ENCODE measurements at regions of chr12 and their contacts with region 1.

Region 1: DNA sequence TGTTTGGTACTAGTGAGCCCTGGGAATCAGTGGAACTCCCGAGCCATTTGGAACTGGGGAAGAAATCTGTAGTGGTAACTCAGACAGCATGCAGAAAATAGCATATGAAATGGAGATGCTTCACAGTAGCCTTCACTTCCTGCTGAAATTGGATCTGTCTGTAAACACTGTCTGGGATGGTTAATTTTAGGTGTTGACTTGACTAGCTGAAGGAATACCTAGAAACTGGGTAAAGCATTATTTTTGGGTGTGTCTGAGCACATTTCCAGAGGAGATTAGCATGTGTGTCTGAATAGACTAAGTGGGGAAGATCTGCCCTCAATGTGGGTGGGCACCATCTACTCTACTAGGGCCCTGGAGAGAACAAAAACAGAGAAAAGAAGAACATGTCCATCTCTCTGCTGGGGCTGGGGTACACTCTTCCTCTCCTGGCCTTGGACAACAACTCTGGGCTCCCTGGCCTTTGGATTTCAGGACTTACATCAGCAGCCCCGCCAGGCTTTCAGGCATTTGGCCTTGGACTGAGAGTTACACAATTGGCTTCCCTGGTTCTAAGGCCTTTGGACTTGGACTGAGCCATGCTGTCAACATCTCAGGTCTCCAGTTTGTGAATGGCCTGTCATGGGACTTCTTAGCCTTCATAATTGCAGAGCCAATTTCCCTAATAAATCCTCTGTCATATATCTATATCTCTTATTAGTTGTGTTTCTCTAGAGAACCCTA is 14.0 kb upstream of the CRADD start:
- DNase-seq: peak; percentile 27 to 52
- ATAC-seq: peak; percentile 99
- H3K4me3 ChIP-seq: no peak overlapping the region
- H3K27ac ChIP-seq: peak overlapping the region; percentile 74 to 92 (median 89)
- H3K4me1 ChIP-seq: peaks cover 18 to 25% of the 10 kb centered on the region in 2 donors
- H3K27me3 ChIP-seq: no peaks in the 10 kb centered on the region
- CTCF ChIP-seq: no peak
- POLR2A ChIP-seq: no peak

Region 2: GRCh38 chr12:93677195-93678064 is 14.3 kb after region 1 on chr12 and contains the start of gene CRADD:
- in situ Hi-C with region 1: no loop called
- intact Hi-C with region 1: loop called (anchors 1 kb)
- DNase-seq: peak; percentile 78 to 84
- ATAC-seq: peak; percentile 92 to 96
- H3K4me3 ChIP-seq: peak within 1 kb of the TSS; percentile 71 to 87 (median 84)
- H3K27ac ChIP-seq: peak within 1 kb of the TSS; percentile 95 to 96 (median 96)
- H3K4me1 ChIP-seq: peaks cover 44 to 47% of the 10 kb centered on the region in 2 donors
- H3K27me3 ChIP-seq: no peaks in the 10 kb centered on the region
- CTCF ChIP-seq: no peak
- POLR2A ChIP-seq: peak; percentile 53 to 70
- total RNA-seq, gene CRADD: 19.4 to 28.7 (median 22.6) TPM